K562 (cell line): ENCODE measurements at regions of chr11 and their contacts with region 1.

Region 1: DNA sequence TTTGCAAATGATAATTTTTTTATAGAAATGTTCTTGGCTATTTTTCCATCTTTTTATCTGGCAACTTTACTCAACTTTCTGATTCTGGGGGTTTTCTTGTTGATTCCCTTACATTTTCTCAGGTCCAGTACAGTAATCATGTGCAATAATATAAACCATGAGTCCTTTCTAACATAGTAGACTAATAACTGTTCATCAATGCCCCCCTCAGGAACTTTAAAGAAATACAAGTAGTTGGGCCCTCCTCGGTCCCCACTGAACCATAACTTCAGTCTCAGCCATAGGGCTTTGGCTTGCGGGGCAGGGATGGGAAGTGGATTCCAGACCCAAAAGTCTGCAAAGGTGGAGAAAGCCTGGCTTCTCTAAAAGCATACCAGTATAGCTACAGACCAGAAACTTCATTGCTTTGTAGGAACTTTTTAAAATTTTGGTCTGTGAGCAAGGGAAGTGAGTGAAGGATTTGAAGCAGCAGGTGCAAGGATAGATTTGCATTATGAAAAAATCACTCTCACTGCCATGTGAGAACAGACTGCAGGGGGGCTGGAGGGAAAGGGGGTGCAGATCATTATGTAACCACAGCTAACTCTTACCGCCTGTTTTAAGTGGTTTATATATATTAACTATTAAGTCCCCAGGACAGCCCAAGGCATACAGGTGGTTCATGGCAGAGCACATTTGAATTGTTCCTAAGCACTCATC is 10.4 kb upstream of the TUB start:
- DNase-seq: peak; percentile 26 to 54 (median 47)
- ATAC-seq: peak; percentile 72
- H3K4me3 ChIP-seq: no peak overlapping the region
- H3K27ac ChIP-seq: no peak overlapping the region
- H3K4me1 ChIP-seq: peaks cover 8 to 9% of the 10 kb centered on the region in 2 experiments; a peak in 2 of 5 replicates
- H3K27me3 ChIP-seq: peaks cover 16 to 54% of the 10 kb centered on the region in 2 experiments
- CTCF ChIP-seq: peak; percentile 6 to 50 (median 29); a peak in 4 of 6 replicates
- EP300 ChIP-seq: no peak
- POLR2A ChIP-seq: no peak
- RAD21 ChIP-seq: peak; percentile 15 to 48; a peak in 2 of 4 replicates

Region 2: GRCh38 chr11:7945291-7945690 is 125.3 kb before region 1 on chr11:
- CTCF ChIA-PET with region 1: no interaction called
- POLR2A ChIA-PET with region 1: no interaction called
- in situ Hi-C with region 1: no loop called
- intact Hi-C with region 1: no loop called
- DNase-seq: no peak
- ATAC-seq: no peak
- H3K4me3 ChIP-seq: no peak overlapping the region
- H3K27ac ChIP-seq: no peak overlapping the region
- H3K4me1 ChIP-seq: no peaks in the 10 kb centered on the region
- H3K27me3 ChIP-seq: no peaks in the 10 kb centered on the region; a peak in 1 of 5 replicates
- CTCF ChIP-seq: no peak
- EP300 ChIP-seq: no peak
- POLR2A ChIP-seq: no peak
- RAD21 ChIP-seq: no peak

Region 3: DNA sequence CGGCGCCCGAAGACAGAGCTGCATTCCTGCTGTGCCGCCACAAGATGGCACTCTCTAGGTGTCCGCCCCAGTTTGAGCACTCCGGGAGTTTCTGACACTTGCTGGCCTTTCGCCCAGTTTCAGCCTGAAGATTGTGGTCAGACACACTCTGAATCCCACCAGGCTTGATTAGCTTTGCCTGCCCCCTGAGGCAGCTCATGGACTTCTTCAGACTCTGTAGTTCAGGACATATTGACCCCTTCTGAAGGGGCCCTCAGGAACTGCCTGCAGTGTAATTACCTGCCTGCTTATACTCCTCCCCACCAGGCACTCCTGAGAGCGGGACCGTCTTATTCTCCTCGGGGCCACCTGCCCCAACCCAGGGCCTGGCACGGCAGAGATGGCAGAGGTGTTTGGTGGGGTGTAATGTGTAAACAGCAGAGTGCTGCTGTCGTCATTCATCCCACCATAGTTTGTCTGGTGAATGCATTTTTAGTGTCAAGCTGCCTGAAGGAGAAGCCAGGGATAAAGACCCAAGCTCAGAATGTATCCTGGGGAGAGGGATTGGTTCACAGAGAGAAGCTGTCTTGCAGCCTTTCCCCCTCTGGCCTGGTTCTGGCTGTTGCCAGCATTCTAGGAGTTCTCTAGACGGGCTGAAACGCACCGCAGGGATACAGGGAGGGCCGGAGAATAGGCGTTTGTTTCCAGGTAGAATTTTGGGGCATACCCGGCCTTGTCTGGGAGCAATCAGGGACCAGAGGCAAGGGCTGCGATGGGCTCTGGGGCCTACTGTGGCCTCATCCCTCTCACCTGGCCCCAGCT is 37.1 kb before region 1 on chr11:
- CTCF ChIA-PET with region 1: interaction called, 16 read pairs
- POLR2A ChIA-PET with region 1: no interaction called
- in situ Hi-C with region 1: no loop called
- intact Hi-C with region 1: loop called (anchors 5 kb)
- DNase-seq: peak; percentile 76 to 82 (median 80)
- ATAC-seq: peak; percentile 93
- H3K4me3 ChIP-seq: no peak overlapping the region
- H3K27ac ChIP-seq: no peak overlapping the region
- H3K4me1 ChIP-seq: no peaks in the 10 kb centered on the region; a peak in 2 of 5 replicates
- H3K27me3 ChIP-seq: peaks cover 14 to 53% of the 10 kb centered on the region in 2 experiments; a peak in 4 of 5 replicates
- CTCF ChIP-seq: peak; percentile 84 to 90 (median 87)
- EP300 ChIP-seq: no peak
- POLR2A ChIP-seq: no peak
- RAD21 ChIP-seq: peak; percentile 72 to 79